CD8-positive, alpha-beta T cell (primary cell): ENCODE measurements at regions of chr22 and their contacts with region 1.

Region 1: DNA sequence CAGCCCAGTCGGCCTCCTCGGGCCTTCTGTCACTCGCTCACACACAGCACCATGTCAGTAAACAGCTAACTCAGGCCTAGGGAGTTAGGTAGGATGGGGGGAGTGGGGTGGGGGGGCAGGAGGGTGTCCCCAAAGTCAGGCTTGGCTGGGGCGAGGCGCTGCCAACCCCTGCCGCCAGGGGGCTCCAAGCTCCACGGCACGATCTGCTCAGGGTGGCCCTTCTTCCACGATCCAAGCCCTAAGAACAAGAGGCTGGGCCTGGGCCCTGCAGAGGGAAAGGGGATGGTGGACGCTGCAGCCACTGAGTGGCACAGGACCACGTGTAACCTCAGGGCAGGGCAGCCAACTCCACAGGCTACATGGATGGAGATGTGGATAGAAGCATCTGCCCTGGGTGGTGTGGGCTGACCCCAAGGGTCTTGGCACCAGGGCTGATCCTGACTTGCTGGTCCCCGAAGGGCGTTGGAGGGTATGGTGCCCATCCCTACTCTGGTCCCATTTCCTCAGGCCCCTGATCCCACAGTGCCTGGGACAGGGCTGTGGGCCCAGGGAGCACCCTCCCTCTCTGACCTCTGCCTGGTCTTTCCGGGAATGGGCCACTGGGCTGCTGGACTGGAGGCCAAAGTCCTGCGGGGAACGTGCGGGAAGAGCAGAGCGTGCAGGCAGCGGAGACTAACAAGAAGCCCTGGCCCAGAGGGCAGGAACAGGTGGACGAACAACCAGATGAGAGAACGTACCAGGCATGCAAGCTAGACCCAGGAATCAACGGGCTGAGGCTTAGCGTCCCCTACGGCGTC is 29.1 kb upstream of the TXNRD2 start:
- DNase-seq: peak; percentile 66 to 89 (median 81)
- ATAC-seq: peak; percentile 88
- H3K4me3 ChIP-seq: no peak overlapping the region
- H3K4me3 Mint-ChIP-seq: no peak overlapping the region
- H3K27ac ChIP-seq: peak overlapping the region in 1 of 2 experiments; percentile 60
- H3K27ac Mint-ChIP-seq: no peak overlapping the region
- H3K4me1 ChIP-seq: peaks cover 16% of the 10 kb centered on the region
- H3K4me1 Mint-ChIP-seq: peaks cover 16% of the 10 kb centered on the region
- H3K27me3 ChIP-seq: no peaks in the 10 kb centered on the region
- H3K27me3 Mint-ChIP-seq: no peaks in the 10 kb centered on the region
- CTCF ChIP-seq: peak; percentile 85

Region 2: DNA sequence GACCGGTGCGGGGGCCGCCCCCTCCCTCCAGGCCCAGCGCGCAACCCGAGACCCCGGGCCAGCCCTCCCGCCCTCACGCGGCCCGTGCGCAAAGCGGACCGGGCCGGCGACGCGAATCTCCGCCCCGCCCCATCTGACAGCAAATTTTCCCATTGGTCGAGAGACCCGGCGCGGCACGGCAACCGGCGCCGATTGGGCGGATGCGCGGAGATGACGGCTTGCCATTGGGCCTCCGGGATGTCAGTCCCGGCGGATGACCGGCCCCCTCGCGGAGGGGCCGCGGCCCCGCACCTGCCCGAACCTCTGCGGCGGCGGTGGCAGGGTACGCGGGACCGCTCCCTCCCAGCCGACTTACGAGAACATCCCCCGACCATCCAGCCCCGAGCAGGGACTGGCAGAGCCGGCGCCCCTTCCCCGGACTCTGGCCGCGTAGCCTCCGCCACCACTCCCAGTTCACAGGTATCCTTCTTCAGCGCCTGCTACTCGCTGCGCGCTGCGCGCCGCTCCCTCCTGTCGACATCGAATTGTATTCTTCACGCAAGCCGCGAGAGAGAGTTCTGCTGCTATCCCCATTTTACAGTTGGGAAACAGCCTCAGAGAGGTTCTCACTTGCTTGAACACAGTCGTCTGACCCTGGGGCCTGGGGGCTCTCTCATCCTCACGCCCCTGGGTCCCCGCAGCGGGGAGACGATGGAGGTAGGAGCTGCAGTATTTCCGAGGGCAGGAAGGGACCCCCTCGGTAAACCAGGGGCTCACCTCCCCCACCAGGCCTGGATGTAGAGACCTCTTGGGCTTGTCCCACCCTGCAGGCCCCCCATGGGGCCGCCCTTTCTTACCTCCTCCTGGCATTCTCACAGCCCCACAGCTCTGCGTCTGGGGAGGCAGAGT is 46.3 kb after region 1 on chr22 and contains the start of gene ARVCF:
- CTCF ChIA-PET with region 1: interaction called, 28 read pairs
- POLR2A ChIA-PET with region 1: no interaction called
- intact Hi-C with region 1: loop called (anchors 1 kb)
- DNase-seq: peak; percentile 85 to 96 (median 92)
- ATAC-seq: peak; percentile 66
- H3K4me3 ChIP-seq: peak within 1 kb of the TSS; percentile 79 to 81
- H3K4me3 Mint-ChIP-seq: peak within 1 kb of the TSS; percentile 91
- H3K27ac ChIP-seq: no peak within 1 kb of the TSS
- H3K27ac Mint-ChIP-seq: peak within 1 kb of the TSS; percentile 14
- H3K4me1 ChIP-seq: peaks cover 19% of the 10 kb centered on the region
- H3K4me1 Mint-ChIP-seq: peaks cover 25% of the 10 kb centered on the region
- H3K27me3 ChIP-seq: no peaks in the 10 kb centered on the region
- H3K27me3 Mint-ChIP-seq: no peaks in the 10 kb centered on the region
- CTCF ChIP-seq: no peak
- total RNA-seq, gene ARVCF: 1.1 to 2.3 TPM

Region 3: DNA sequence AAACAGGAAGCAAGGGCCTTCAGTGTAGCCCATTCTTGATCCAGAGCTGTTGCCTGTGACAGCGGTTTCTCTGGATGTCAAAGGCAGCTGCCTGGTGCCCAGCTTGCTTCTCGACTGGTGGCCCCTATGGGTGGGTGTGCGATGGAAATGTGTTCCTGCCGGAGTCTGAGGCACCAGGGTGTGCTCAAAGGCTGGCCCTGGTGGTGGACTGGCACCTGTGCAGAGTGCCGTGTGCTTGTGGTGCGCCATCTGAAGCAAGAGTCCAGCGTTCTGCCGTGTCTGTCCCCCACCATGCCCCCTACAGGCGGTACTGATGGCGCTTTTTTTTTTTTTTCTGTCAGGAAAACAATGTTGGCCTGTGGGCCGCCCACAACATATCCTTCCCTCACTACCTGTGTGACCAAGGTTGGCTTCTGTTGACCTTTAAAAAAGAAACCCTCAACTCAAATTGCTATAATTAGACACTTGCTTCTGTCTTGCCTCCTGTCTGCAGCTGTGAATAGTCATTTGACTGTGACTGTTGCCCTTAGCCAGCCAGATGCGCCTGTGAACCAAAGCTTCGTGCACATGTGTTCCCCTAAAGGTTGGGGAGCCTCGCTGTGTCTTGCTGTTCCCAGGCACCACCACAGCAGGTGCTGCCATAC is 140.5 kb after region 1 on chr22:
- CTCF ChIA-PET with region 1: interaction called, 18 read pairs
- POLR2A ChIA-PET with region 1: no interaction called
- intact Hi-C with region 1: loop called in 1 of 2 experiments (anchors 5 kb)
- DNase-seq: peak in 3 of 9 experiments; percentile 51 to 76 (median 68)
- ATAC-seq: peak; percentile 77
- H3K4me3 ChIP-seq: no peak overlapping the region
- H3K4me3 Mint-ChIP-seq: no peak overlapping the region
- H3K27ac ChIP-seq: peak overlapping the region in 1 of 2 experiments; percentile 43
- H3K27ac Mint-ChIP-seq: peak overlapping the region; percentile 75
- H3K4me1 ChIP-seq: peaks cover 23% of the 10 kb centered on the region
- H3K4me1 Mint-ChIP-seq: peaks cover 19% of the 10 kb centered on the region
- H3K27me3 ChIP-seq: no peaks in the 10 kb centered on the region
- H3K27me3 Mint-ChIP-seq: no peaks in the 10 kb centered on the region
- CTCF ChIP-seq: peak; percentile 38

Region 4: DNA sequence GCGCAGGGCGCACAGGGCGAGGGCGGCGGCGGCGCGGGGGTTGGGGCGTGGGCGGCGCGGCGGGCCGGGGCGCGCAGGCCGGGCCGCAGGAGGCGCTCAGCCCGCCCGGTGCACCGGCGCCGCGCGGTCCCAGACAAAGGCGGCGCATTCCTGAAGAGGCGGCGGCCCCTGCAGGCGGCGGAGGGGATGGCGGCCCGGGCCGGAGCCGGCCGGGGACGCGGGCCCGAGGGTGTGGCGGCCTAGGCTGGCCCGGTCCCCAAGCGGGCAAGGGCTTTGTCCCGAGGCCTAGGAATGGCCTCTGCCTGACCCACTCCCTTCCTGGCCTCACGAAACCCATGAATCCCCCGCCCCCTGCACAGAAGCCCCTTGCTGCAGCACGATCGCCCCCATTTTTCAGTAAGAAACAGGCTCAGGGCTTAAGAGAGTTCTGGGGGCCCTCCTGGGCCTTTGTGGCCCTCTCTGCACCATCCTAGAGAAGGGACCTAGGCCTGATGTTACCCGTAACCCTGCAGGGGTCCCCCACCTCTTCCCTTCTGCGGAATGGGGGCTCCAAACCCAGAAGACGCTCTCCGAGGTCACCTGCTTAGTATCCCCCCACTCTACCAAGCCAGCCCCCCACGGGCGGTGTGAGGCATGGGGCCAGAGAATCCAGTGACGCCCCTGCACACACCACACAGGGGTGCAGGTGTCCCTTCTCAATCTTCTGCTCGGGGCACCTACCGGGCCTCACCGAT is 297.8 kb after region 1 on chr22 and contains the start of gene RTN4R:
- CTCF ChIA-PET with region 1: no interaction called
- POLR2A ChIA-PET with region 1: no interaction called
- intact Hi-C with region 1: loop called in 1 of 2 experiments (anchors 5 kb)
- DNase-seq: peak; percentile 36 to 77 (median 54)
- ATAC-seq: peak; percentile 86
- H3K4me3 ChIP-seq: peak within 1 kb of the TSS; percentile 19 to 31
- H3K4me3 Mint-ChIP-seq: peak within 1 kb of the TSS; percentile 74
- H3K27ac ChIP-seq: no peak within 1 kb of the TSS
- H3K27ac Mint-ChIP-seq: no peak within 1 kb of the TSS
- H3K4me1 ChIP-seq: peaks cover 10% of the 10 kb centered on the region
- H3K4me1 Mint-ChIP-seq: peaks cover 6% of the 10 kb centered on the region
- H3K27me3 ChIP-seq: no peaks in the 10 kb centered on the region
- H3K27me3 Mint-ChIP-seq: no peaks in the 10 kb centered on the region
- CTCF ChIP-seq: peak; percentile 48
- total RNA-seq, gene RTN4R: 1.1 to 1.2 TPM

Region 5: GRCh38 chr22:20283674-20284066 is 313.0 kb after region 1 on chr22:
- CTCF ChIA-PET with region 1: interaction called, 7 read pairs
- POLR2A ChIA-PET with region 1: no interaction called
- intact Hi-C with region 1: loop called in 1 of 2 experiments (anchors 1 kb)
- DNase-seq: no peak
- ATAC-seq: no peak
- H3K4me3 ChIP-seq: no peak overlapping the region
- H3K4me3 Mint-ChIP-seq: no peak overlapping the region
- H3K27ac ChIP-seq: no peak overlapping the region
- H3K27ac Mint-ChIP-seq: no peak overlapping the region
- H3K4me1 ChIP-seq: no peaks in the 10 kb centered on the region
- H3K4me1 Mint-ChIP-seq: peaks cover 3% of the 10 kb centered on the region
- H3K27me3 ChIP-seq: no peaks in the 10 kb centered on the region
- H3K27me3 Mint-ChIP-seq: peaks cover 2% of the 10 kb centered on the region
- CTCF ChIP-seq: no peak